ENCODE measurements at regions of chr2 and their contacts with region 1.

Region 1: DNA sequence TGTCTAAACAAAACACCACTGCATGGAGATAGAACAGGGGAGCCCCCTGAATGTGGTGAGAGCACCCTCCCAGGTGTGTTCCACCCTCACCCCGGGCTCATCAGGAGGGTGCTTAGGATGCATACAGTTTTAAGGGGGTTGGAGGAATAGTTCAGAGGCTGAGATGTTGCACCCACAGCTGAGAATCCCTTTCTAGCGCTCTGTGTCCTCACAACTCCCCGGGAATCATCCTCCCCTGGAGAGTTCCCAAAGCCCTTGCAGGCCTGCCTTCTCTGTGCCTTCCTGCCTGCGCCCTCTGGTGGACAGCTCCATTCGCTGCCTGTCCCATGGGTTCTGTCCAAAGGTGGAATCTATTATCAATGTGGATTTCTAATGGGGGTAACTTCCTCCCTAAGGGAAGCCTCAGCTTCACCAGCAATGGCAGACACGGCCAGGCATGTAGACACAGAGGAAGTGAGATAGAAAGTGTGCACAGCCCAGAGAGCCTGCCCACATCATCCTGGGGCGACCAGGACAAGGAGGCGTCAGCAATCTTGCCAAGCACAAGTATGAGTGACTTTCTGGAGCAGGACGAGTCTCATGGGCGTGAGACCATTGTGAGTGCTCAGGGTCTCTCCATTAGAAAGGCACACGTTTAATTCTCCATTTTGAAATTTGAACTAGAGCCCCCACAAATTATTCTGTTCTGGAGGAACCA is 1.2 kb upstream of the UGT1A5 start:
- DNase-seq: peak; percentile 60
- H3K4me3 ChIP-seq: no peak overlapping the region
- H3K27ac ChIP-seq: no peak overlapping the region
- H3K4me1 ChIP-seq: peaks cover 4% of the 10 kb centered on the region
- H3K27me3 ChIP-seq: no peaks in the 10 kb centered on the region
- CTCF ChIP-seq: peak; percentile 88 to 92

Region 2: GRCh38 chr2:233404222-233404621 is 307.2 kb before region 1 on chr2:
- CTCF ChIA-PET with region 1: no interaction called
- dilution Hi-C with region 1: no loop called
- in situ Hi-C with region 1: no loop called
- intact Hi-C with region 1: loop called (anchors 1 kb)
- DNase-seq: peak; percentile 46
- H3K4me3 ChIP-seq: no peak overlapping the region
- H3K27ac ChIP-seq: no peak overlapping the region
- H3K4me1 ChIP-seq: no peaks in the 10 kb centered on the region
- H3K27me3 ChIP-seq: no peaks in the 10 kb centered on the region
- CTCF ChIP-seq: peak; percentile 94 to 95

Region 3: DNA sequence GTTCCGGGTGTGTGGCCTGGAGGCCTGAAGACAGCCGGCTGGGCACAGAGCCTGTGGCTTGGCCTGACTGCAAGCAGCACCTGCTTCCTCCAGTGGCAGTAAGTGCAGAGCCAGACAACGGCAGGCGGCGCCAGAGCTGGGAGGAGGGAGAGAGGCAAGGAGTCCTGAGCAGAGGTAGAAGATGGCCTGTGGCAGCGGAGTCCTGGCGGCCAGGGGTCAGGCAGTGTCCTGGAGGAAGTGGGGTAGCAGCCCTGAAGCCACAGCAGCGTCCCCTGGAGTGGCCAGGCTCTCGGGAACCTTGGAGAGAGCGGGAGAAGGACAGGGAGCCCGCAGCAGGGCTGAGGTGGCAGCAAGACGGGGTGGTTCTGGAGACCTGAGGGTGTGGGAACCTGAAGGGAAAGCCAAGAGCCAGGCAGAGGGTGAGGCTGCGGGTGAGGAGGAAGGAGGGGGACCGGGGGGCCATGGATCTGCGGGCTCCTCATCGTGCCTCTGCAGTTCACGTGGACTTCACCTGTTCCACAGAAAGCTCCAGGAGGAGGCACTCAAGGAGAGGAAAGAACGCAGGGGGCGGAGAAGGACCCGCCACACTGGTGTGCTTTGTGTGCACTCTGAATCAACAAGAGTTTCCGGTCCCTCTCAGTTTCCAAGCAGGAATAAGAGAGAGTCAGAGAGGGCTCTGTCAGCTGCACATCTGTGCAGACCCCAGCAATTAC is 230.8 kb before region 1 on chr2:
- CTCF ChIA-PET with region 1: no interaction called
- dilution Hi-C with region 1: no loop called
- in situ Hi-C with region 1: no loop called
- intact Hi-C with region 1: loop called (anchors 2 kb)
- DNase-seq: no peak
- H3K4me3 ChIP-seq: no peak overlapping the region
- H3K27ac ChIP-seq: no peak overlapping the region
- H3K4me1 ChIP-seq: peaks cover 13% of the 10 kb centered on the region
- H3K27me3 ChIP-seq: no peaks in the 10 kb centered on the region
- CTCF ChIP-seq: peak; percentile 12 to 39

Region 4: DNA sequence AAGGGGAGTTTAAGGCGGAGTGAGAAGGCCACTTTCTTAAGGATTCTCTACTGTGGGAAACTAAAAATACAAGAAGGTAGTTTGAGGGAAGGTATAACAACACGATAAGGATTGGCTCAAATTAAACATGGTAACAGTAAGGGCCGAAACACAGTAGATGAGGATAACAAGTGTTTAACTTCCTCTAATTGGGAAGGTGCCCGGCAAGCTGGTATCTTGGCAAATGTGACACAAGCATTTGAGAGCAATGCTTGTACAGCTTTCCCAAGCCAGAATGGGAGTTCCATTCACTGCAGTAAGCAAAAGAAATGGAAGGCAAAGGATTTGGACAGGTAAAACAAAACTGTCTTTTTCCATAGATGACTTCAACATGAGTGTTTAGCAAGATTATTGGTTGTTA is 164.7 kb before region 1 on chr2:
- CTCF ChIA-PET with region 1: no interaction called
- dilution Hi-C with region 1: no loop called
- in situ Hi-C with region 1: no loop called
- intact Hi-C with region 1: no loop called
- DNase-seq: no peak
- H3K4me3 ChIP-seq: no peak overlapping the region
- H3K27ac ChIP-seq: no peak overlapping the region
- H3K4me1 ChIP-seq: peaks cover 3% of the 10 kb centered on the region
- H3K27me3 ChIP-seq: no peaks in the 10 kb centered on the region
- CTCF ChIP-seq: no peak

Region 5: DNA sequence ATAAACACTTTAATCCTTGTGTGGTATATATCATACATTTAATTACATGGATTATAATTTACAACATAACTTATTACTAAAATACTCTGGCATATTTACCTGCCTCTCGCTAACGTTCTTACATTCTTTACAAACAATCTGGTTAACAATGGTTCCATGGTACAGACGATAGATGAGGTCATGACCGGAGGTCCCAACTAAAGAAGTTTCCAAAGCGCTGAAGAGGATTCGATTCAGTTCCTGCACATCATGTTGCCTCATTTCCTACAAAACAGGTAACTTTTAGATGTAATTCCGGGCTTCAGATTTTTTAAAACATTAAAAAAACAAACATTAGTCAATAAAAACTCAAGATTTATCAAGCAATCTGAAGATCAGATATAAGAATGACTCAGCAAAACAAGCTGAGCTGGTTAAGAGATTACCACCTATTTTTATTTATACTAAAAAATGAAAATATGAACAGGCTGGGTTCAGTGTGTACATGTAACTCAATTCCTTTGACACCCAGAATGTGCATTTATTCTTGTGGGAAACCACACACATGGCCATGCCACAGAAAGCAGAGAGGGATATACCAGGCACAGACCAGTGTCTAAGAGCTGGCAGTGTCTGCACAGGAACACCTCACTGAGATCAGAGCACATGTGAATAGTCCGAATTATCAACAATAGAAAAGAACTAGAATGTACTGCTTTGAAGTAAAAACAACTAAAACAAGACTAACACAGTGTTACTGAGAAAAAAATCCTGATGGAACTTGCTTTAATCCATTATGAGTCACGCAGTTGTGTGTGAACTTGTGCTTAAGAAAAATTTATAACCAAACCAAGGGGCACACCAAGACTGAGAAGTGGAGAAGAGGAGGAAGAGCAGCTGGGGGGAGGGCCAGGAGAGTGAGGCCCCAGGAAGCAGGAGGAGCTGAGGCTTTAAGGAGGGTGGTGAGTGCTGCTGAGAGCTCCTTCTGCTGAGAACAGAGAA is 154.4 kb before region 1 on chr2:
- CTCF ChIA-PET with region 1: no interaction called
- dilution Hi-C with region 1: no loop called
- in situ Hi-C with region 1: no loop called
- intact Hi-C with region 1: loop called (anchors 1 kb)
- DNase-seq: peak; percentile 92
- H3K4me3 ChIP-seq: peak overlapping the region in 2 of 3 experiments; percentile 3 to 25
- H3K27ac ChIP-seq: peak overlapping the region; percentile 62
- H3K4me1 ChIP-seq: peaks cover 15% of the 10 kb centered on the region
- H3K27me3 ChIP-seq: no peaks in the 10 kb centered on the region
- CTCF ChIP-seq: no peak

Region 6: DNA sequence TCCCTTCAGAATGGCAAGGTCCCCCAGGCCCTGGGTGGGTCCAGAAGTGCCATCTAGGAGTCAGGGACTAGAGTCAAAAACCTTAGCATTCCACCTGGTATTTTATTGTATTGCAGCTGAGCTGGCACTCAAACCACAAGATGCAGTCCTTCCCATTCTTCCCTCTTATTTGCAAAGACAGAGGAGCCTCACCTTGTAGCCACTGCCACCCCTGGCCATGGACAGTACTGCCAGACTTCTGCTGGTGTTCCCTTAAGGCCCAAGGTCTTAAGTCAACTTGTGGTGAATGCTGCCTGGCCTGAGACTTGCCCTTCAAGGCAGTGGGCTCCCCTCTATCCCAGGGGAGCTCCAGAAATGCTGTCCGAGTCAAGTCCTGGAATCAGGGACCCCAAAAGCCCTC is 68.3 kb before region 1 on chr2:
- CTCF ChIA-PET with region 1: no interaction called
- dilution Hi-C with region 1: no loop called
- in situ Hi-C with region 1: no loop called
- intact Hi-C with region 1: loop called (anchors 1 kb)
- DNase-seq: peak; percentile 41
- H3K4me3 ChIP-seq: no peak overlapping the region
- H3K27ac ChIP-seq: no peak overlapping the region
- H3K4me1 ChIP-seq: peaks cover 2% of the 10 kb centered on the region
- H3K27me3 ChIP-seq: no peaks in the 10 kb centered on the region
- CTCF ChIP-seq: peak; percentile 40 to 48

Region 7: GRCh38 chr2:234169187-234169570 is 457.7 kb after region 1 on chr2:
- CTCF ChIA-PET with region 1: no interaction called
- dilution Hi-C with region 1: no loop called
- in situ Hi-C with region 1: no loop called
- intact Hi-C with region 1: no loop called
- DNase-seq: peak; percentile 12
- H3K4me3 ChIP-seq: no peak overlapping the region
- H3K27ac ChIP-seq: no peak overlapping the region
- H3K4me1 ChIP-seq: no peaks in the 10 kb centered on the region
- H3K27me3 ChIP-seq: no peaks in the 10 kb centered on the region
- CTCF ChIP-seq: no peak